Caco-2 (cell line): ENCODE measurements at regions of chr4 and their contacts with region 1.

Region 1: DNA sequence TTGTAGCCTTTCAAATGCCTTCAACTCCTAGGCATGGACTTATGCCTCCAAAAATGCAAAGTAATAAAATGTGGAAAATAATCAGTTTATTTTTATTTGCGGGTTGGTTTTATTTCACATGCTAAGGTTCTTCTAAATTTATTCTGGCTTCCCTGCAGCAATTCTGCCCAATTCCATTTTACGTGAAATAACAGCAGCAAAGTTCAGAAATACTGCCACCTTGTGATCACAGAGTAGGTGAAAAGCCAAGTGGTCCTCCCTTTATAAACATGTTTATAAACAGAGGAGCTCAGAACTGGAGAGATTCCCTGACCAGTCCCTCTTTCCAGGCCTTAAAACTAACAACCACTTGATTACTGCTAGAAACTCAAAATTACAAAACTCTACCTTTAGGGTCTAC is 14.7 kb upstream of the DCHS2 start:
- DNase-seq: peak in 1 of 2 experiments; percentile 20
- H3K4me3 ChIP-seq: no peak overlapping the region
- H3K4me3 Mint-ChIP-seq: no peak overlapping the region
- H3K27ac Mint-ChIP-seq: no peak overlapping the region
- H3K4me1 ChIP-seq: 0 out of 2 replicates have a peak, but pooled peaks cover 7% of the 10 kb centered on the region
- H3K4me1 Mint-ChIP-seq: no peaks in the 10 kb centered on the region
- H3K27me3 ChIP-seq: no peaks in the 10 kb centered on the region
- H3K27me3 Mint-ChIP-seq: peaks cover 24% of the 10 kb centered on the region
- CTCF ChIP-seq: peak; percentile 35 to 44

Region 2: GRCh38 chr4:154329268-154329868 is 176.9 kb before region 1 on chr4:
- CTCF ChIA-PET with region 1: interaction called, 5 read pairs
- POLR2A ChIA-PET with region 1: no interaction called
- intact Hi-C with region 1: loop called (anchors 2 kb)
- DNase-seq: peak in 1 of 2 experiments; percentile 4
- H3K4me3 ChIP-seq: no peak overlapping the region
- H3K4me3 Mint-ChIP-seq: no peak overlapping the region
- H3K27ac Mint-ChIP-seq: no peak overlapping the region
- H3K4me1 ChIP-seq: no peaks in the 10 kb centered on the region
- H3K4me1 Mint-ChIP-seq: no peaks in the 10 kb centered on the region
- H3K27me3 ChIP-seq: no peaks in the 10 kb centered on the region
- H3K27me3 Mint-ChIP-seq: no peaks in the 10 kb centered on the region
- CTCF ChIP-seq: peak; percentile 18 to 34

Region 3: DNA sequence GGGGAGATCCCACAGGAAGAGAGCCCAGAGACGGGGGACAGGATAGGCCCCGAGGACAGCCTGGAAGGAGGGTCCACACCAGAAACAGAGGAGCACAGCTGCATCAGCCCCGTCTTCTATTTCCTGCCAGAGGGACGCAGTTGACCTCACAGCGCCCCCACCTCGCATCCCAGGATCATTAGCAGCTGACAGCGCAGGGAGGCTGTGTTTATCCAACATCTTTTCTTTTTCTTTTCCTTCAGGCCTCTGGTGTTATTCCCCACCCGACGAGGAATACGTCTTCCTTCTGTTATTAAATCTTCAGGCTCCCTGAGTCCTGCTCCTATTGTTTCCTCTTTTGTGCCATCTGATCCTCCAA is 90.1 kb before region 1 on chr4:
- CTCF ChIA-PET with region 1: interaction called, 8 read pairs
- POLR2A ChIA-PET with region 1: no interaction called
- intact Hi-C with region 1: loop called (anchors 1 kb)
- DNase-seq: no peak
- H3K4me3 ChIP-seq: no peak overlapping the region
- H3K4me3 Mint-ChIP-seq: peak overlapping the region; percentile 75
- H3K27ac Mint-ChIP-seq: no peak overlapping the region
- H3K4me1 ChIP-seq: no peaks in the 10 kb centered on the region
- H3K4me1 Mint-ChIP-seq: peaks cover 12% of the 10 kb centered on the region
- H3K27me3 ChIP-seq: no peaks in the 10 kb centered on the region
- H3K27me3 Mint-ChIP-seq: peaks cover 15% of the 10 kb centered on the region
- CTCF ChIP-seq: peak; percentile 17 to 31

Region 4: GRCh38 chr4:154551872-154552686 is 45.8 kb after region 1 on chr4:
- CTCF ChIA-PET with region 1: no interaction called
- POLR2A ChIA-PET with region 1: no interaction called
- intact Hi-C with region 1: loop called (anchors 1 kb)
- DNase-seq: peak; percentile 71 to 79
- H3K4me3 ChIP-seq: no peak overlapping the region
- H3K4me3 Mint-ChIP-seq: no peak overlapping the region
- H3K27ac Mint-ChIP-seq: no peak overlapping the region
- H3K4me1 ChIP-seq: 0 out of 2 replicates have a peak, but pooled peaks cover 4% of the 10 kb centered on the region
- H3K4me1 Mint-ChIP-seq: peaks cover 18% of the 10 kb centered on the region
- H3K27me3 ChIP-seq: no peaks in the 10 kb centered on the region; the same call in 1 of the 2 replicates
- H3K27me3 Mint-ChIP-seq: no peaks in the 10 kb centered on the region
- CTCF ChIP-seq: peak; percentile 70 to 78

Region 5: GRCh38 chr4:154626793-154627484 is 120.7 kb after region 1 on chr4:
- CTCF ChIA-PET with region 1: interaction called, 3 read pairs
- POLR2A ChIA-PET with region 1: no interaction called
- intact Hi-C with region 1: loop called (anchors 1 kb)
- DNase-seq: peak; percentile 85 to 88
- H3K4me3 ChIP-seq: peak overlapping the region; percentile 41
- H3K4me3 Mint-ChIP-seq: no peak overlapping the region
- H3K27ac Mint-ChIP-seq: no peak overlapping the region
- H3K4me1 ChIP-seq: peaks cover 6% of the 10 kb centered on the region
- H3K4me1 Mint-ChIP-seq: peaks cover 9% of the 10 kb centered on the region
- H3K27me3 ChIP-seq: no peaks in the 10 kb centered on the region; the same call in 1 of the 2 replicates
- H3K27me3 Mint-ChIP-seq: peaks cover 4% of the 10 kb centered on the region
- CTCF ChIP-seq: peak; percentile 79 to 95

Region 6: DNA sequence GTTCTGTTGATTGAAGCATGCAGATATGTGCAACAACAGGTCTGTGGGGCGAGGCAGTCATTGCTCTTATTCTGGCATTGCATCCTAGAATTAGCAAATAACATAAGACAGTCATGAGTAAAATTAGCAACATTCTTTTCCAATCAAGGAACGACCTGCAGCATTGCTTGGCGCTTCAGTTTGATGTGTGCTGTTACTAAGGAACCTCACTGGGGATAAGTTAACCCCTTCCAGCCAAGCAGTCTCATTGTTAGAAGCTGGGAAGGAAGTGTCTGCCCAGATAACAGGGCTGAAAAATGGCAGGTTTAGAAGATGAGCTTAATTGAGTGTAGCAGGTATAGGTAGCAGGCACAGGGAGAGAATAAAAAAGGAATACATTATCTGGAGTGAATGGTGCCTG is 330.3 kb after region 1 on chr4:
- CTCF ChIA-PET with region 1: no interaction called
- POLR2A ChIA-PET with region 1: no interaction called
- intact Hi-C with region 1: no loop called
- DNase-seq: no peak
- H3K4me3 ChIP-seq: no peak overlapping the region
- H3K4me3 Mint-ChIP-seq: no peak overlapping the region
- H3K27ac Mint-ChIP-seq: no peak overlapping the region
- H3K4me1 ChIP-seq: peaks cover 8% of the 10 kb centered on the region; the same call in 1 of the 2 replicates
- H3K4me1 Mint-ChIP-seq: peaks cover 11% of the 10 kb centered on the region
- H3K27me3 ChIP-seq: no peaks in the 10 kb centered on the region
- H3K27me3 Mint-ChIP-seq: no peaks in the 10 kb centered on the region
- CTCF ChIP-seq: no peak